Aorta (tissue), 5 donors: ENCODE measurements at regions of chr3 and their contacts with region 1.

Region 1: GRCh38 chr3:134373994-134374790 is at the start of gene AMOTL2:
- DNase-seq: peak; percentile 90 to 95
- ATAC-seq: peak; percentile 83
- H3K4me3 ChIP-seq: peak within 1 kb of the TSS; percentile 82 to 95
- H3K27ac ChIP-seq: peak within 1 kb of the TSS; percentile 91 to 99
- H3K4me1 ChIP-seq: no peaks in the 10 kb centered on the region
- H3K27me3 ChIP-seq: no peaks in the 10 kb centered on the region
- total RNA-seq, gene AMOTL2: 82.1 to 118 TPM

Region 2: DNA sequence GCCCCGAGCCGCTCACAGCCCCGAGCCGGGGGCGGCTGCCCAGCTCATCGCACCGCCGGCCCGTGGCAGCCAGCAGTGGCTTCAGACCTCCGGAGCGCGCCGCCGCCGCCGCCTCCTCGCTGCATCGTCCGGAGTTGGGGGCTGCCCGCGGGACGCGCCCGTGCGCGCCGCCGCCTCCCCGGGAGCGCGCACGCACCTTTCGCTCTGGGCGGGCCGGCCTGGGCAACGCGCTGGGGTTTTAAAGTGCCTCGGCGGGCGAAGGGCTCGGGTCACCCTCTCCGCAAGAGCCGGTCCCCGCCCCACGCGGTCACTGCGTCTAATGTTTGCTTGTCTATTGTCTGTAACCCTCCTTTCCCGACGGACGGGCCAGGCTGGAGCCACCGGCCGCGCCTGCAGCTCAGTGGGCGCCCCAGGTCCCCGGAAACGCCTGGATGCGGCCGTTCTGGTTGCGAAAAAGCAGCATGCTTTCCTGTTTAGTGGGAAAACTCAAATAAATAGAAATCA is 123.4 kb before region 1 on chr3 and contains the start of gene RYK:
- intact Hi-C with region 1: loop called in 1 of 2 experiments (anchors 10 kb)
- DNase-seq: peak; percentile 88 to 92
- ATAC-seq: peak; percentile 96
- H3K4me3 ChIP-seq: peak within 1 kb of the TSS; percentile 78 to 96
- H3K27ac ChIP-seq: peak within 1 kb of the TSS in 1 of 2 donors; percentile 88
- H3K4me1 ChIP-seq: peaks cover 0 to 5% of the 10 kb centered on the region in 2 donors
- H3K27me3 ChIP-seq: no peaks in the 10 kb centered on the region
- total RNA-seq, gene RYK: 71.8 to 73.5 TPM

Region 3: DNA sequence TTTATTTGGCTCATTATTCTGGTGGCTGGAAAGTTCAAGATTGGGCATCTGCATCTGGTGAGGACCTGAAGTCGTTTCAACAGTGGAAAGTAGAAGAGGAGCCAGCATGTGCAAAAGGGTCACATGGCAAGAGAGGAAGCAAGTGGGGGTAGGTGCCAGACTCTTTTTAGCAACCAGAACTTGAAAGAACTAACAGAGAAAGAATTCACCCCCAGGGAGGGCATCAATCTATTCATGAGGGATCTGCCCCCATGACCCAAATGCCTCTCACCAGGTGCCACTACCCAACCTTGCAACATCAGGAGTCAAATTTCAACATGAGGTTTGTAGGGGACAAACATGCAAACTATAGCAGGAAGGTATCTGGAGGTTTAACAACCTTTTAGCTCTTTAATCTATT is 113.2 kb before region 1 on chr3:
- intact Hi-C with region 1: no loop called
- DNase-seq: no peak
- ATAC-seq: no peak
- H3K4me3 ChIP-seq: no peak overlapping the region
- H3K27ac ChIP-seq: no peak overlapping the region
- H3K4me1 ChIP-seq: no peaks in the 10 kb centered on the region
- H3K27me3 ChIP-seq: no peaks in the 10 kb centered on the region

Region 4: DNA sequence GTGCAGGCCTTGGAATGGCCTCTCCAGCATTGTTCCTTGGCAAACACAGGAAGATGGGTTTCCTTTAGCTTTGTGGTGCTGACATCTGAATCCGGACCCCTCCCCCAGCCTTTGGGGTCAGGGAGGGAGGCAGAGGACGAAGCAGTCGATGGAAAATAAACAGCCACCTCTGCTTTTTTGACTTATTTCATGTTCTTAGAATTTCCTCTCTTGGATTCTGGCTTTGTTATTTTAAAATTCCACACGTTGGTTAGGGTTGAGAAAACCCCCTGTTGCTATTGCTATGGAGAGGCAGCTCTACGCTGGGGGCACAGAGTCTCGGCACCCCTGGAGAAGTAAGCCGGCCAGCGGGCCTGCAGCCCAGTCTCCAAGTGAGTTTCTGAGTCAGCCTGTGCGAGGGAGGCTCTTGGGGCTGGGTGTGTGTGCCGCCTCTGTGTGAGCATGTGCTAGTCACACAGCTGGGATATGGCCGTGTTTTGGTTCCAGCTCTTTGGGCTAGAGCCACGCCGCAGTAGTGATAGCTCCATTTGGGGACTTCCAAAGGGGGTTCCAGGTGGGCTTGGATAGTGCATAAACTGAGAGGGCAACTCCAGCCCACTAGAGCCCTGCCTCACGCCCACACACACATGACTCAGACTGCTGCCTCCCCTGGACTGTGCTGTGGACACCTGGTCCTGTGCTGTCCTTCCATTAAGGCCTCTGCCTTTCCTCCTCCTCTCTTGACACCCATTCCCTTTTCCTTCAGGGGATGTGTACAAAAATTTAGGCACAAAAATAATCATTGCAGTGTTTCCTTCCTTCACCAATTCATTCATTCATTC is 58.7 kb before region 1 on chr3:
- intact Hi-C with region 1: loop called (anchors 1 to 2 kb)
- DNase-seq: peak; percentile 91 to 94
- ATAC-seq: peak; percentile 86
- H3K4me3 ChIP-seq: no peak overlapping the region
- H3K27ac ChIP-seq: peak overlapping the region; percentile 20 to 43
- H3K4me1 ChIP-seq: peaks cover 0 to 10% of the 10 kb centered on the region in 2 donors
- H3K27me3 ChIP-seq: no peaks in the 10 kb centered on the region

Region 5: DNA sequence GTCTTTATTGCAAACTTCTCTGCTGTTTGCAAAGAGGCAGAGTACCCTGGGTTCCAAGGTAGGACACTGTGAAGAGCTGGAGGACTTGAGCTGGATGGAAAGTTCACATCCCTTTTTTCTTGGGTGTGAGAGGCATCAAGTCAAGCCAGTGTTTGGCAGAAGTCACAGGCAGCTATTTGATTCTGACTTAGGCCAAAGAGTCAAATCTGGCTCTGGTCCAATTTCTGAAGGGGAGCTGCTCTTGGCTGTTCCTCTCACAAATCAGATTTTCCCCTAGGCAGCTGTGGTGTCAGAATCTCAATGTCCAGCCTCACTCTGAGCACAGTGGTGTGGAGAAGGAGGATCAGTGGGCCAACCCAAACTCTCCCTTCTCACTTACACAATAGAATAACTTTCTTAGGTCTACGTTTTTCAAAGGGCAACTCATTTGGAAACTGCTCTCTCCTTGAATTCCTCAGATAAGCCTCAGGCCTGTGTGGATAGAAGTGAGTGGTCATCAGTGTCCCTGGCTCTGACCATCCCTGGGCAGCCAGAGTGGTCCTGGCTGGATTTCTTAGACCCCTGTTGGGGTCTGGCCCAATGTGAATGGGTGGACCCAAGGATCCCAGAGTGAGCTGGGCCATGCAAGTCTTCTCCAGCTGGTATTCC is 18.3 kb after region 1 on chr3:
- intact Hi-C with region 1: loop called in 1 of 2 experiments (anchors 1 kb)
- DNase-seq: no peak
- ATAC-seq: peak; percentile 71
- H3K4me3 ChIP-seq: no peak overlapping the region
- H3K27ac ChIP-seq: peak overlapping the region; percentile 69 to 90
- H3K4me1 ChIP-seq: peaks cover 4 to 8% of the 10 kb centered on the region in 2 donors
- H3K27me3 ChIP-seq: no peaks in the 10 kb centered on the region

Region 6: GRCh38 chr3:134473868-134474546 is 99.8 kb after region 1 on chr3:
- intact Hi-C with region 1: loop called in 1 of 2 experiments (anchors 5 kb)
- DNase-seq: peak; percentile 69 to 83
- ATAC-seq: peak; percentile 82
- H3K4me3 ChIP-seq: no peak overlapping the region
- H3K27ac ChIP-seq: no peak overlapping the region
- H3K4me1 ChIP-seq: no peaks in the 10 kb centered on the region
- H3K27me3 ChIP-seq: no peaks in the 10 kb centered on the region

Region 7: DNA sequence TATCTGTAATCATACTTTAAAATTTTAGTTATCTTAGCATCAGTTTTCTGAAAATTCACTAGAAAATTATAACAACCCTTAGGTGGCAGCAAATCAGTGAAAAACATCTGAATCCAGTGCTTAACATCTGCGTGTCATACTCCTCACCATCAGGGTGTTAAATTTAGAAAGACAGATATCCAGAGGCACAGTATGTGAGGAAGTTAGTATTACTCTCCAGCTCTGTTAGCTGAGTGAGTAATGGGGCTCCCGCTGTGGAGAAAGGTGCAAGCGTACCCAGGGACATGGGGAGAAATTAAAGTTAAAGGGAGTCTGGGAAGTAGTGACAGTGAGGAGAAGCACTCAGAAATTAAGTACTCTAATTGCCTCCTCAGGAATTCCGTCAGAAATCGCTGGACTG is 162.6 kb after region 1 on chr3:
- intact Hi-C with region 1: no loop called
- DNase-seq: no peak
- ATAC-seq: no peak
- H3K4me3 ChIP-seq: no peak overlapping the region
- H3K27ac ChIP-seq: no peak overlapping the region
- H3K4me1 ChIP-seq: no peaks in the 10 kb centered on the region
- H3K27me3 ChIP-seq: no peaks in the 10 kb centered on the region